Breast epithelium (tissue), 4 donors: ENCODE measurements at regions of chr3 and their contacts with region 1.

Region 1: GRCh38 chr3:30511524-30512278 is 94.7 kb upstream of the TGFBR2 start:
- DNase-seq: peak in 1 of 2 donors; percentile 30
- H3K4me3 ChIP-seq: no peak overlapping the region
- H3K27ac ChIP-seq: peak overlapping the region; percentile 58 to 83
- H3K4me1 ChIP-seq: no peaks in the 10 kb centered on the region
- H3K27me3 ChIP-seq: no peaks in the 10 kb centered on the region
- CTCF ChIP-seq: no peak
- POLR2A ChIP-seq: no peak

Region 2: DNA sequence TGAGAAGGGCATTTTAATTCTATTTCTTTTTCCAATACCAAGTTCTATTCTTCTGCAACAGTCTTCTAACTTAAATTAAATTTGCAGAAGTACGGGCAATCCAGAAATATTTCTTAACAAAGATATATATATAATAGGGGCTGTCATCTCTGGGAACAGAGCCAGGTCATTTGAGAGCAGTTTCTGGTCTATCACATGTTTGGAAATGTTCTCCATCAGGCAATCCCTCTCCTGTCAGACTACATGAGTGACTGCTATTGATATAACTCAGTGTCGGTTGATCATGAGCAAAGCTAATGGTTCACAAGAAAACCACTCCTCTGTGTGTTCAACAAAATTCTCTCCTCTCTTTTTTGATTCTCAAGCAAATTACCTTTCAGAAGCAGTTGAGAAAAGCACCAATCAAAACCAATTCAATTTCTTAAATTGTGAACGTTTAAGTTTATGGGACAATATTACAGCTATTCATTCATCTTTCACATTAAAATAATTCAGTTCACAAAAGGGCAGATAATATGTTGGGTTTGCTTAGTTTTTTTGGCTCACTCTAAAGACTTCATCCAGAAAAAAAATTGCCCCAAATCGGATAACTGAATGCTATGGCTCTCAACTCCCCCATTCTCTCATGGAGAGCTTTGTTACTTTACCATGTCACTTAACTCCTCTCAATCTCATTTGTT is 58.2 kb before region 1 on chr3:
- intact Hi-C with region 1: loop called (anchors 2 kb)
- DNase-seq: no peak
- H3K4me3 ChIP-seq: no peak overlapping the region
- H3K27ac ChIP-seq: no peak overlapping the region
- H3K4me1 ChIP-seq: no peaks in the 10 kb centered on the region
- H3K27me3 ChIP-seq: no peaks in the 10 kb centered on the region
- CTCF ChIP-seq: no peak
- POLR2A ChIP-seq: no peak